GM23248 (cell line): ENCODE measurements at regions of chr21 and their contacts with region 1.

Region 1: DNA sequence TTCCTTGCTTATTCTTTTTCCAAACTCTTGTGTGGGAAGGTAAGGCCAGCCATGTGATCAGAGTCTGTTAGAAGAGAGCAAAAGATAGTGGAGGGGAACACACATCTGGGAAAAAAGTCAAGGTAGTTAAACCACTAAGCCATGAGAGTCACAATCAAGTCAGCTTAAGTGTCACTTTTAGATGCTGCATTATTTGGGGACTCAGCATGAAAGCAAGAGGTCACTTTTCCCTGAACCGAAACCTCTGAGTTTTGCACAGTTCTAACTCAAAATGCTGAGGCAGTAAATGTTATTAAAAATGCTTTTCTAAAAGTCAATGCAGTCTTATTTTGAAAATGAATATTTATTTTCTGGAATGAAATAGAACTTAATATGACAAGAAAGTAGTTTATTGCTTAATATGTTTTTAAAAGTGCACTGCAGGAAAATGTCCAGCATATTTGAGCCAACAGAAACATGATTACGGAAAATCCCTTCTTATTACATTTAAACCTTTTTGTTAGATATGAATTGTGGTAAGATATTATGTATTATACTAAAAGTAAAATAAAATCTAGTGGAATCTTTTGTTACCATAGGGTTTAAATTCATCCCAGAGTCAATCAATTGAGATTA is 69.3 kb downstream of the RBM11 start:
- DNase-seq: no peak
- H3K4me3 ChIP-seq: no peak overlapping the region
- H3K27ac ChIP-seq: no peak overlapping the region
- H3K4me1 ChIP-seq: no peaks in the 10 kb centered on the region
- H3K27me3 ChIP-seq: no peaks in the 10 kb centered on the region

Region 2: DNA sequence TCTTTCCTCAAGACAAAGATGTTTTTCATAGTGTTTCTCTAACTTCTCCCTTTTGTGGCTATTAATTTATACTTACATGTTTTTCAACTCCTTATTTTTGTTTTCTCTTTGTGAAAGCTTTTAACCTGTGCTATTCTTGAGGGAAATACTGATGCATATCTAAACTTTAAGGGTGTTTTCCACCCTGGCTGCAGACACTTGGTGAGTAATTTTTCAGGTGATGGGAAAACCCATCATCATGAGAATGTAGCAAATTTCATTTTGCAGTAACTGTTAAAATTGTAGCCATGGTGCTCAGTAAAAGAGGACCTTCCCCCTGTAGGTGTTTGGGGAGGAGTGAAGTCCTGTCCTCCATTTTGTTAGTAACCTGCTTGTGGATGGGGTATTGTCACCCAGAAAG is 198.7 kb before region 1 on chr21:
- in situ Hi-C with region 1: no loop called
- DNase-seq: no peak
- H3K4me3 ChIP-seq: no peak overlapping the region
- H3K27ac ChIP-seq: no peak overlapping the region
- H3K4me1 ChIP-seq: no peaks in the 10 kb centered on the region
- H3K27me3 ChIP-seq: no peaks in the 10 kb centered on the region

Region 3: GRCh38 chr21:14325595-14325994 is 40.3 kb after region 1 on chr21:
- in situ Hi-C with region 1: loop called (anchors 10 kb)
- DNase-seq: no peak
- H3K4me3 ChIP-seq: no peak overlapping the region
- H3K27ac ChIP-seq: no peak overlapping the region
- H3K4me1 ChIP-seq: no peaks in the 10 kb centered on the region
- H3K27me3 ChIP-seq: no peaks in the 10 kb centered on the region